ENCODE measurements at regions of chr2 and their contacts with region 1.

Region 1: DNA sequence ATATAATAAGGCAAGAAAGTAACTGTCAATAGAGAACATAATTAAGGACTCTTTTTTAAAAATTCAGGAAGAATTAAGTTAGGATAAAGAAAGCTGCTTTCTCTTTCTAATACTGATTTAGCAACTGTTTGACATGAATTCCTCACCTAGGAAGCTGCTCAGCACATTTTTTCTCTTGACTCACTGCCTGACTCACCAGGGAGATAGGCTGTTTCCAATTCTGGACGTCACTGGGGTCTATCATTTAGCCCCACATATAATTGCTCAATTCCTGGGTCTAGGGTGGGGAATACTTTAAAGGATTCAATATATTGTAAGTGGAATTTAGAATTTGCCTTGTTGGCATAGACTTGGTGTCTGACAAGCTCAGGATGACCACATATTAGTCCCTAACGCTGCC is 50.8 kb upstream of the UGP2 start:
- DNase-seq: no peak
- H3K4me3 ChIP-seq: no peak overlapping the region
- H3K27ac ChIP-seq: no peak overlapping the region
- H3K4me1 ChIP-seq: no peaks in the 10 kb centered on the region
- H3K27me3 ChIP-seq: no peaks in the 10 kb centered on the region
- CTCF ChIP-seq: no peak
- POLR2A ChIP-seq: no peak

Region 2: DNA sequence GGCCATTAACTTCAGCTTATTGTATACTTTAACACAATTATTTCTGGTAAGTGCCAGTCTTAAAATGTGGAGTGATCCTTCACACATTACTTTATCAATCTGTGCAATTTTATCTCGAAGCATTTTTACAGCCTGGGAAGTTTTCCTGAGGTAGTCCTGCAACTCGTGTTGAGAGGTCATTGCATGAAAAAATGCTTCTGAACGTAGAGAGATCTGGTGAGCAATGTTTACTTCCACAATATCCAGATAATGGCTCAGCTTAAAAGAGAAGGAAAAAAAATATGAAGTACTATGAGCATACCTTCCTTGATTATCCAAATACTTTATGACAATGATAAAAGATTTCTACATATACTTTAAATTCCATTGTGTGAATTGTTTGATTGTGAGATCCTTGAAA is 171.3 kb after region 1 on chr2:
- intact Hi-C with region 1: loop called (anchors 5 kb)
- DNase-seq: no peak
- H3K4me3 ChIP-seq: no peak overlapping the region
- H3K27ac ChIP-seq: no peak overlapping the region
- H3K4me1 ChIP-seq: no peaks in the 10 kb centered on the region
- H3K27me3 ChIP-seq: no peaks in the 10 kb centered on the region
- CTCF ChIP-seq: no peak
- POLR2A ChIP-seq: no peak